WTC11 (cell line): ENCODE measurements at regions of chrX and their contacts with region 1.

Region 1: GRCh38 chrX:49184294-49185061 is 1.7 kb downstream of the PRICKLE3 start:
- DNase-seq: peak; percentile 97
- ATAC-seq: peak; percentile 88
- H3K4me3 Mint-ChIP-seq: peak overlapping the region; percentile 77
- H3K27ac Mint-ChIP-seq: peak overlapping the region; percentile 95
- H3K4me1 Mint-ChIP-seq: peaks cover 17% of the 10 kb centered on the region
- H3K27me3 Mint-ChIP-seq: no peaks in the 10 kb centered on the region; the same call in 1 of the 2 replicates
- CTCF ChIP-seq: no peak

Region 2: GRCh38 chrX:49165901-49166881 is 18.3 kb before region 1 on chrX:
- CTCF ChIA-PET with region 1: interaction called, 14 read pairs
- POLR2A ChIA-PET with region 1: interaction called, 5 read pairs
- DNase-seq: peak; percentile 89
- ATAC-seq: peak; percentile 63
- H3K4me3 Mint-ChIP-seq: peak overlapping the region; percentile 66
- H3K27ac Mint-ChIP-seq: 0 out of 2 replicates have a peak overlapping the region, but pooled peaks have one; percentile 58
- H3K4me1 Mint-ChIP-seq: peaks cover 13% of the 10 kb centered on the region
- H3K27me3 Mint-ChIP-seq: peaks cover 65% of the 10 kb centered on the region
- CTCF ChIP-seq: no peak

Region 3: DNA sequence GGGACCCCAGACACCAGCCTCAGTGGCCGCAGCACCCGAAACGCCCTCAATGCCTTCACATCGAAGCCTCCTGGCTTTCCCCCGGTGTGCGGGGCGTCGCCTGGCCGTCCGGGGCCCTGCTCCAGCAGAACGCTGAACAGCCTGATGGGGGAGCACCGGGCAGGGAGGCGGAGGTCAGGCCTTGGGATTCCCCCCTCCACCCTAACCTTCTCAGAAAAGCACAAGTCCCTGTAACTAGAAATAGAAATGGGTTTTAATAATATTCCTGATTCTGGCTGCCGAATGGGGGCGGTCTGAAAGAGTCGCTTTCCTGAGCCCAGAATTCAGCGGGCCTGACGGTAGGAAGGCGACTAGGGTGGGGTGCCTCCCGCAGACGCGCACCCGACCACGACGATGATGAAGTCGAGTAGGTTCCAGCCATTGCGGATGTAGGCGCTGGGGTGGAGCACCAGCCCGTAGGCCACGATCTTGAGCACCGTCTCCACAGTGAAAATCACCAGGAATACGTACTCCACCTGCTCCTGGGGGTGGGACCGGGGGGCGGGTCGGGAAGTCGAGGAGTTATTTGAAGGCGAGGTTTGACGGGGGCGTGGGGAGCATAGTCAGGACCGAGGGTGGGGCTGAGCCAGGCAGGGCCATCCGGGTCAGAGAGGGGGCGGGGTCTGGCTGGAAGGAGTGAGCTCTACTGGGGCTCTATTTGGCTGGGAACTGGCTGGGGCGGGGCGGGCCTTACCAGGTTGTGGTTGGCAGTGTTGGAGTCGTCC is 46.2 kb after region 1 on chrX:
- CTCF ChIA-PET with region 1: interaction called, 10 read pairs
- POLR2A ChIA-PET with region 1: no interaction called
- DNase-seq: peak; percentile 82
- ATAC-seq: peak; percentile 88
- H3K4me3 Mint-ChIP-seq: peak overlapping the region; percentile 75
- H3K27ac Mint-ChIP-seq: peak overlapping the region; percentile 57; the same call in 1 of the 2 replicates
- H3K4me1 Mint-ChIP-seq: peaks cover 10% of the 10 kb centered on the region
- H3K27me3 Mint-ChIP-seq: peaks cover 7% of the 10 kb centered on the region
- CTCF ChIP-seq: no peak